ENCODE measurements at regions of chr17 and their contacts with region 1.

Region 1: DNA sequence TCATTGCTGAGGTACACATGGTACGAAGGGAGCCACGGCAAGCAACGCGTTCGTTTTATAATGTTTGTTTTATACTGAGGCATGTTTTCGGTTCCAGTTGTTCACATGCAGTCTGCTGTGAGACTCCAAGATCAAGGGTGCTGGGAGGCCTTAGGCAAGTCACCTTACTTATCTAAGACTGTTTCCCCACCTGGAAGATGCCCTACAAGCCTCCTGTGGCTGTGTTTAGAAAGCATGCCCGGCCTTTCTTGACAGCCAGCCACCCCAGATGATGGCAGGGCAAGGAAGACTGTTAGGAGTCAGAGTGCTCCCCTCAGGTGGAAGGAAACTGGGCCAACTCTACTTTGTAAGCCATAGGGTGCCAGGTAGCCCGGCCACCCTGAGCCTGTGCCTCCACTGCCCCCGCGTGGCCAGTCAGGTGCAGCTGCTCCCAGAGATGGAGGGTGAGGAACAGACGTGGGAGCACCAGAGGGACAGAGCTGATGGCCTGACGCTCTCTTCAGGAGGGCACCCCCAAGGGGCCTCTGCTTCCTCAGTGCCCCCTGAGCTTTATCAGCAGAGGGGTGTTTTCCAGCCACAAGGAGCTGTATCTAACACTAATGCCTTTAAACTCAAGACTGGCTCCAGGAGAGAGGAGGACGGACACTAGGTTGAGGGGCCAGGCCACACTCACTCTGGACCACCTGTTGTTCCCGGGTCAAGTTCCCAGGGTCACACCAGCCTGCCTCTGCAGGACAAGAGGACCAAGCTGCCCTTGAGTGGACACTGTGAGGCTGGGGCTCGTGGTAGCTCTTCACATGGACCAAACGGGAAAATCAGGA is 5.4 kb downstream of the NAT9 start:
- DNase-seq: peak; percentile 69
- H3K27ac ChIP-seq: peak overlapping the region; percentile 79
- CTCF ChIP-seq: peak; percentile 95

Region 2: DNA sequence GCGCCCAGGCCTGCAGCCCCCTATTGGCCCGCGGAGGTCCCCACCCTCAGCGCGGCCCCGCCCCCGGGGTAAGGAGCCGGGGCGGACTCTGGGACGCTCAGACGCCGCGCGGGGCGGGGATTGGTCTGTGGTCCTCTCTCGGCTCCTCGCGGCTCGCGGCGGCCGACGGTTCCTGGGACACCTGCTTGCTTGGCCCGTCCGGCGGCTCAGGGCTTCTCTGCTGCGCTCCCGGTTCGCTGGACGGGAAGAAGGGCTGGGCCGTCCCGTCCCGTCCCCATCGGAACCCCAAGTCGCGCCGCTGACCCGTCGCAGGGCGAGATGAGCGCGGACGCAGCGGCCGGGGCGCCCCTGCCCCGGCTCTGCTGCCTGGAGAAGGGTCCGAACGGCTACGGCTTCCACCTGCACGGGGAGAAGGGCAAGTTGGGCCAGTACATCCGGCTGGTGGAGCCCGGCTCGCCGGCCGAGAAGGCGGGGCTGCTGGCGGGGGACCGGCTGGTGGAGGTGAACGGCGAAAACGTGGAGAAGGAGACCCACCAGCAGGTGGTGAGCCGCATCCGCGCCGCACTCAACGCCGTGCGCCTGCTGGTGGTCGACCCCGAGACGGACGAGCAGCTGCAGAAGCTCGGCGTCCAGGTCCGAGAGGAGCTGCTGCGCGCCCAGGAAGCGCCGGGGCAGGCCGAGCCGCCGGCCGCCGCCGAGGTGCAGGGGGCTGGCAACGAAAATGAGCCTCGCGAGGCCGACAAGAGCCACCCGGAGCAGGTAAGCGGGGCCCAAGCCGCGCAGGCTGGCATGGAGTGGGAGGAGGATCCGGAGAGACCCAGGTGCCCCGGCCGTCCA is 22.0 kb before region 1 on chr17 and contains the start of gene NHERF1:
- CTCF ChIA-PET with region 1: interaction called, 42 read pairs
- POLR2A ChIA-PET with region 1: interaction called, 7 read pairs
- DNase-seq: peak; percentile 96
- H3K27ac ChIP-seq: peak within 1 kb of the TSS; percentile 81
- CTCF ChIP-seq: 0 out of 2 replicates have a peak, but pooled peaks have one; percentile 0

Measured in RWPE1 (cell line).